Activated CD4-positive, alpha-beta memory T cell treated with anti-CD3 and anti-CD28 coated beads for 36 hours (primary cell): ENCODE measurements at regions of chr1 and their contacts with region 1.

Region 1: DNA sequence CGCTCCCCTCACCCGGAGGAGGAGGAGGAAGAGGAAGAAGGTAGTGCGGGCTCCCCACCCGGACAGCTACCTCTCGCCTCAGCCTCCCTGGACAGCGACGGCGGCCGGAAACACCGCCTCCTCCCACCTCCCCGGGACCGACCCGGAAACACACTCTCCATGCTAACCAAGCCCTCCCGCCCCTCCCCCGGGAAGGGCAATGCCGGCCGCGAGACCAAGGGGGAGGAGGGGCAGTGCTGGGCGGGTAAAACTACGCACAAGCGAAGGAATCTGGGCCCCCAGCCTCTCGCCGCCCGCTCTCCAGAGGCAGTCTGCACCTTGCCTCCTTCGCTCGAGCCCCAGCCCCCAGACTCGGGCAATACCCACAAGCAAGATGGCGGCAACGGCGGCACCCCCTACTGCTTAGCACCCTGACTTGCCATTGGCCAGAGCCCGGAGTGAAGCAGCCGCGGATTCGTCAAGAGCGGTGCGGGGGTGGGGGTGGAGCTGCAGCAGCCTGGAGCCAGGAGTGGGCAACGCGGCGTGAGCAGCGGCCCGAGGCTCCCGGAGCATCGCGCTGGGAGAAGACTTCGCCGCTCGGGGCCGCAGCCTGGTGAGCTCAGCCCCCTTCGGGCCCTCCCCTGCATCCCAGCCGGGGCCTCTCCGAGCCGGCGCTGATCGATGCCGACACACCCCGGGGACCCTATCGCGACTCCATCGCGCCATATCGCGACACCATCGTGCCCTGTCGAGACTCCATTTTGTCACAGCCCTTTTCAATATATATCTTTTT is at the starts of genes KIAA0319L and NCDN:
- DNase-seq: peak; percentile 98
- H3K4me3 Mint-ChIP-seq: peak within 1 kb of the TSS; percentile 97
- H3K27ac Mint-ChIP-seq: peak within 1 kb of the TSS; percentile 95
- H3K4me1 Mint-ChIP-seq: peaks cover 58% of the 10 kb centered on the region
- H3K27me3 Mint-ChIP-seq: no peaks in the 10 kb centered on the region
- total RNA-seq, gene KIAA0319L: 28.3 to 30.9 TPM
- total RNA-seq, gene NCDN: 21.6 to 21.7 TPM

Region 2: DNA sequence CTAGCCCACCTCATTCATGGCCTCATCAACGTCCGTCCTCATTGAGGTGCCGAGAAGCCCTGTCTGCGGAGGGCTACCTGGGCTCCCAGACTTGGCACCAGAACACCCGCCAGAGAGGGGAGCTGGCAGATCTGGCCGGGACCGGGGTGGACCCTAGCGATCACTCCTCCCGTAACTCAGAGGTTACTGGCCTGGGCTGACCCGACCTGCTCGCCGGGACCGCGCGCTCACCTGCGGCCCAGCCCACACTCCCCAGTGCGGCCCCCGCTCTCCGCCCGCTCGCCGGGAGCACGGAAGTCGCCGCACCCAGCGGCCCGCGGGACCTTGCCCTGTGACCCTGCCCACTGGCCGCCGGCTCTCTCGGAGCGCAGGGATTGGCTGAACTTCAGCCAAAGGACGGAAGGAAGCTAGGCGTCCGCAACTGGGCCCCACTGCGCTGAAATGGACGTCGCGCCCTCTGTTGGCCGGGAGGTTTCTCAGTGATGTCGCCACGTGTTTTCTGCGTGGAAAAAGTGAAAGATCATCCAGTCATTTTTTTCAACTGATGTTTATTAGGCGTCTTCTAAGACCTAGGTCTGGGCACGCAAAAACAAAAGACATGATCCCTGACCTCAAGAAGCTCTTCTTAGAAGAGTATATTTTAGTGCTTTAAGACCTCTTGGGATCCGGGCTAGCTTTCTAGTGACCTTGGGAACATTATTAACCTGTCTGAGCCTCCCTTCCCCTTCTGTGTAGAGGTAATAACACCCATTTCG is 697.9 kb before region 1 on chr1 and contains the start of gene SMIM12:
- CTCF ChIA-PET with region 1: no interaction called
- POLR2A ChIA-PET with region 1: no interaction called
- intact Hi-C with region 1: loop called (anchors 10 kb)
- DNase-seq: peak; percentile 96
- H3K4me3 Mint-ChIP-seq: peak within 1 kb of the TSS; percentile 98
- H3K27ac Mint-ChIP-seq: peak within 1 kb of the TSS; percentile 98
- H3K4me1 Mint-ChIP-seq: peaks cover 42% of the 10 kb centered on the region
- H3K27me3 Mint-ChIP-seq: no peaks in the 10 kb centered on the region
- total RNA-seq, gene SMIM12: 46.5 to 46.7 TPM

Region 3: DNA sequence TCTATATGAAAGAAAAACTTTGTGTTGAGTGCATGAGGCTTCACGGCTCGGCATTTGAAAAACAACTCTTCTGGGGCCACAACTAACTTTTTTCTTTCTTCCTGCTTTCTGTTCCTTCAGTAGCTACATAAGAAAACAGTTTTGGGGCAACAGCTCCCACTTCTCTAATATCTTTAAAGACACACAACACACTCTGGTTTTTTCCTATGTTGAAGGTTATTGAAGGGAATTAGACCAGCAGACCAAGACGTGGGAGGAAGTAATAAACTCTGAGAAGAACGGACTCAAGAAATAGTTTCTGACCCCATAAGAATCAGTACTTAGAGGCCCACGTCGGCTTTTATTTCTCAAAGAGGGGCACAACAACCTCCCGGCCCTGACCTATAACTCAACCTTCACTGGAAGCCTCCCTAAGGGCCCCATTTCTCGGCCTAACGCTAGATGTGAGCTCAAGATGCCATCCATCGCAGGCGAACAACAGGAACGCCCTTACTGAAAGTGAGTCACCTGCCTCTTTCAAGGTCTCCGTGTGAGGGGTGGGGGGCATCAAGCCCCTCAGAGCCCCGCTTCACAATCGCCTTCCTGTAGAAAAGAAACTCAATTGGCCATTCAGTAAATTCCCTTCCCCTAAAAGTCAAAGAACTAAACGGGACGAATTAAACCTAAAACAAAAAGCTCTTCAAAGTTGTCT is 526.6 kb before region 1 on chr1:
- CTCF ChIA-PET with region 1: no interaction called
- POLR2A ChIA-PET with region 1: no interaction called
- intact Hi-C with region 1: loop called (anchors 5 kb)
- DNase-seq: peak; percentile 58
- H3K4me3 Mint-ChIP-seq: peak overlapping the region; percentile 99
- H3K27ac Mint-ChIP-seq: peak overlapping the region; percentile 96
- H3K4me1 Mint-ChIP-seq: peaks cover 29% of the 10 kb centered on the region
- H3K27me3 Mint-ChIP-seq: no peaks in the 10 kb centered on the region

Region 4: DNA sequence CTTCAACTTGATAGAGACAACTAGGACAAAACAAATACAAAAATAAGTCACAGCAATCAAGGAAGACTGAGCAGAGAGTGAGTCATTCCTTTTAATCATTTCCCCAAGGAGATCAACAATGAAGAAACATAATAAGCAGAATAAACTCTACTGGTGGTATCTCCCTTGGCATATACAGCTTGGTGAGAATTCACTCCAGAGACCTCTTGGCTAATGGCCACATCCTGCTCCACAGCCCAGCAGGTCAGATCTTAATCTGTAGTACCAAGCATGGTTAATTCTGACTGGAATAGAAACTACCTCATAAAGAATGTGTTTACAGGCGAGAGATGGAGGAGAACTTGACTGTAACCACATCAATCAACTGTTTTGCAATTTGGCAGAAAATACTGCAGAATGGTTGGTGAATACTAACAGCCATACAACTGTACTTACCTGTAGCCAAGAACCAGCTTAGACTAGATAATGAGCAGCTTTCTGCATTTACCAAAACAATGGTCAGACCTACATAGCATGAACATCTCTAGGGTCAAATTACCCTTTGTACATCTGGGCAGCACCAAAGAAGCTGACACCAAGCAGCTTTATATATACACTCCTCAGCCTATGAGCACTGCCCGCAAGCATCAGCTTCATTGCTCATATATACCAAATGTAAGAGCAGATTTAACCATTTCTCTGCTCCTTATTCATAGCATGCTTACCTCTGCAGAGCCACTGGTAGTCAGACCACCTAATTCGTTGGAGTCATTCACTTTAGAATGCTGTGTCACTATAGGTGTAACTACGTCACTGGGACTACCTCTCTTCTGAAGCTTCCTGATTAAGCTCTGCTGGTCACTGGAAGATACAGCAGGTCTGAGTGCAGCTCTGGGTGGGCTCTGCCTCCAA is 51.3 kb before region 1 on chr1:
- CTCF ChIA-PET with region 1: interaction called, 7 read pairs
- POLR2A ChIA-PET with region 1: interaction called, 15 read pairs
- intact Hi-C with region 1: loop called (anchors 1 kb)
- DNase-seq: peak; percentile 77
- H3K4me3 Mint-ChIP-seq: peak overlapping the region; percentile 28
- H3K27ac Mint-ChIP-seq: peak overlapping the region; percentile 81
- H3K4me1 Mint-ChIP-seq: peaks cover 62% of the 10 kb centered on the region
- H3K27me3 Mint-ChIP-seq: no peaks in the 10 kb centered on the region

Region 5: DNA sequence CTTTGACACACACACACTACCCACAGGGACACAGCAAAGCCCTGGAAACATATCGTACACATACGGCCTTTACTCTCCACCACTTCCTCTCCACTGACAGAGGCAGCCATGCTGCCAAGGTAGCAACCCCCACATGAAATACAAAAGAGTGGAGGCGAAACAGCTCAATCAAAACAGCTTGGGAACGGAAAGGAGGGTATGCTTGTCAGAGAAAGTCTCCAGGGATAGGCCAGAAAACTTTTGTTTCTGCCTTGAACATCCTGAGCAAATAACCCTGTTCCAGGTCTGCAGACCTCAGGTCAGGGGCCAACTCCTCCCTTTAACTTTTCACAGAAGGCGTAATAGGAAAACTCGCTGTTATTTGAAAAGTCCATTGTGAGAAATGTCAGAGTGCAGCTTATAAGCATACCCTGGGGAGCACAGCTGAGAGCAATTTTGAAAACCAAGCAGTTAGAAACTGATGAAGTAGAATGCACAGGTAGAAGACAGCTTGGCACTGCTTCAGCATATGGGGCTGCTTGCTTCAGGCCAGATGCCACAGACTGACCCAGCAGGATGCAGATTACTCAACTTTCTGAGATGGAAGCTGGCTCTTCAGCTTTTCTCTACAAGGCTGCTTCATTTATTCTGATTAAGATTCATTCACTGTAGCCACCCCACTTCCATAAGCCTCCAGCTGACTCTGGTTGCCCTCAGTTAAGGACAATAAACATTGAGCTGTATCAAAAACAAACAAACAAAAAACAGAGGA is 18.2 kb before region 1 on chr1:
- CTCF ChIA-PET with region 1: interaction called, 5 read pairs
- POLR2A ChIA-PET with region 1: interaction called, 13 read pairs
- intact Hi-C with region 1: loop called (anchors 1 kb)
- DNase-seq: peak; percentile 56
- H3K4me3 Mint-ChIP-seq: peak overlapping the region; percentile 55
- H3K27ac Mint-ChIP-seq: peak overlapping the region; percentile 87
- H3K4me1 Mint-ChIP-seq: peaks cover 73% of the 10 kb centered on the region
- H3K27me3 Mint-ChIP-seq: no peaks in the 10 kb centered on the region

Region 6: GRCh38 chr1:35641233-35641866 is 83.9 kb after region 1 on chr1 and contains the start of gene PSMB2:
- CTCF ChIA-PET with region 1: no interaction called
- POLR2A ChIA-PET with region 1: no interaction called
- intact Hi-C with region 1: loop called (anchors 5 kb)
- DNase-seq: peak; percentile 98
- H3K4me3 Mint-ChIP-seq: peak within 1 kb of the TSS; percentile 100
- H3K27ac Mint-ChIP-seq: peak within 1 kb of the TSS; percentile 100
- H3K4me1 Mint-ChIP-seq: peaks cover 29% of the 10 kb centered on the region
- H3K27me3 Mint-ChIP-seq: peaks cover 14% of the 10 kb centered on the region
- total RNA-seq, gene PSMB2: 88.1 to 91.5 TPM

Region 7: GRCh38 chr1:37474046-37474759 is 1916.7 kb after region 1 on chr1 and contains the start of gene ZC3H12A:
- CTCF ChIA-PET with region 1: no interaction called
- POLR2A ChIA-PET with region 1: no interaction called
- intact Hi-C with region 1: loop called (anchors 10 kb)
- DNase-seq: peak; percentile 93
- H3K4me3 Mint-ChIP-seq: peak within 1 kb of the TSS; percentile 94
- H3K27ac Mint-ChIP-seq: peak within 1 kb of the TSS; percentile 100
- H3K4me1 Mint-ChIP-seq: peaks cover 37% of the 10 kb centered on the region
- H3K27me3 Mint-ChIP-seq: no peaks in the 10 kb centered on the region
- total RNA-seq, gene ZC3H12A: 39.0 to 40.8 TPM